K562 (cell line): ENCODE measurements at regions of chr13 and their contacts with region 1.

Region 1: DNA sequence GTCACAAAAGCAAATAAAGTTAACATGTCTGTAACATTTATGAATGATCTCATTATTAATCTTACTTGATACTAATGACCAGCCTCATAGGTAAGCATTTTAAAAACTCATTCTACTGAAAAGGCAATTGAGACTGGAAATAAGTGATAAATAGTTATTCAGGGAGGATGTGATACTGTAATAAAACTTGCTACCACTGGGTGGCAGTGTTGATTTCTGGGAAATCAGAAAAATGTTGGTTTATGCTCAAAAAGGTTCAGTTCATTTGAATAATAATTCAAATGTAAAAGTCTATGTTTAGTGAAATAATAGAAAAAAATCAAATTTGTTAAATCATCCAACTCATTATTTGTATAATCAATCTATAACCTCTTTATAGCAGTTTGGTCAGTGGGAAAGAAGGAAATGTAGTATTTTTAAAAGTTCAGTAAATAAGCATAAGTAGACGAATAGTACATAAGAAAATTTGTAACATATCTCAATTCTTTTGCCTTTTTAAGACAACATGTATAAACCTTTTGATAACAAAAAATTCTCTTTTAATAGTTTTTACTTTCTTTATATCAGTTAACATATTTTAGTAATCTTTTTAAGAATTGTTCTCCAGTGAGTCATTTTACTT is 9.6 kb downstream of the ABHD13 start:
- DNase-seq: peak in 3 of 4 experiments; percentile 14 to 53 (median 29)
- ATAC-seq: peak; percentile 41; the same call in 1 of the 3 replicates
- H3K4me3 ChIP-seq: no peak overlapping the region
- H3K27ac ChIP-seq: no peak overlapping the region
- H3K4me1 ChIP-seq: peaks cover 0 to 4% of the 10 kb centered on the region in 2 experiments; a peak in 2 of 5 replicates
- H3K27me3 ChIP-seq: no peaks in the 10 kb centered on the region
- CTCF ChIP-seq: peak in 2 of 3 experiments; percentile 13 to 58; a peak in 4 of 6 replicates
- EP300 ChIP-seq: no peak
- POLR2A ChIP-seq: no peak
- RAD21 ChIP-seq: peak; percentile 34 to 44; a peak in 2 of 4 replicates

Region 2: GRCh38 chr13:108276060-108276459 is 48.3 kb after region 1 on chr13:
- CTCF ChIA-PET with region 1: no interaction called
- POLR2A ChIA-PET with region 1: no interaction called
- in situ Hi-C with region 1: no loop called
- intact Hi-C with region 1: loop called (anchors 5 kb)
- DNase-seq: peak in 1 of 4 experiments; percentile 40
- ATAC-seq: peak; percentile 67
- H3K4me3 ChIP-seq: no peak overlapping the region
- H3K27ac ChIP-seq: no peak overlapping the region; the same call in 2 of the 3 replicates
- H3K4me1 ChIP-seq: no peaks in the 10 kb centered on the region; a peak in 1 of 5 replicates
- H3K27me3 ChIP-seq: no peaks in the 10 kb centered on the region
- CTCF ChIP-seq: no peak
- EP300 ChIP-seq: no peak
- POLR2A ChIP-seq: no peak
- RAD21 ChIP-seq: no peak

Region 3: DNA sequence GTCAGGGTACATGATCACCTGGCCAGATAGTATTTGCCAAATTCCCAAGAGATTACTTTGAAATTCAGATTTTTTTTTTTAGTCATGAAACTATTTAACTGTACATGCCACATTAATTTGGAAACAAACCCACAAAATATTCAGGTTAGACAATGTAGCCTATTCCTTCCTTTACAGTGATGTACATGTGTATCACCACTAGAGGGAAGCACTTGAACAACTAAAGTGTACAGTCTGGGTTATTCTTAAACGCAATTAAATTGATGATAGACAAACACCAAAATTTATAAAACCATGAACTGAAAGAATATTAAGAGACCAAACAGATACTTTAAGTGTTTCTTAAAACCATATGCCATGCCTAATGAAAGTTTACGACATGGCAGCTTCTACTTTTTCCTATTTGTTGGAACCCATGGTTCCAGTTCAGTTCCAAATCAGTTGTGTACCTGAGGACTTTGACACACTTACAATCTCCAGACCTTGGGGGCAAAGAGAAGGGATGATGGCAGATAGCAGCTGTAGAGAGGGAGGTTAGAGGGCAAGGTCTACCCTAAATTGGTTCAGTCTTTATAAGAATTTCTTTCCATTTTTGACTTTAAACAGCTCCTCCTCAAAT is 94.6 kb after region 1 on chr13:
- CTCF ChIA-PET with region 1: interaction called, 3 read pairs
- POLR2A ChIA-PET with region 1: no interaction called
- in situ Hi-C with region 1: no loop called
- intact Hi-C with region 1: loop called (anchors 5 kb)
- DNase-seq: peak; percentile 10 to 47 (median 26)
- ATAC-seq: peak; percentile 86
- H3K4me3 ChIP-seq: no peak overlapping the region
- H3K27ac ChIP-seq: no peak overlapping the region
- H3K4me1 ChIP-seq: no peaks in the 10 kb centered on the region
- H3K27me3 ChIP-seq: no peaks in the 10 kb centered on the region
- CTCF ChIP-seq: peak; percentile 31 to 61 (median 38); a peak in 3 of 6 replicates
- EP300 ChIP-seq: no peak
- POLR2A ChIP-seq: no peak
- RAD21 ChIP-seq: peak; percentile 71 to 79

Region 4: GRCh38 chr13:108508263-108508662 is 280.5 kb after region 1 on chr13:
- CTCF ChIA-PET with region 1: no interaction called
- POLR2A ChIA-PET with region 1: no interaction called
- in situ Hi-C with region 1: no loop called
- intact Hi-C with region 1: loop called (anchors 5 kb)
- DNase-seq: peak in 1 of 4 experiments; percentile 27
- ATAC-seq: no peak
- H3K4me3 ChIP-seq: no peak overlapping the region
- H3K27ac ChIP-seq: no peak overlapping the region
- H3K4me1 ChIP-seq: no peaks in the 10 kb centered on the region
- H3K27me3 ChIP-seq: no peaks in the 10 kb centered on the region
- CTCF ChIP-seq: peak in 2 of 3 experiments; percentile 22 to 40; a peak in 3 of 6 replicates
- EP300 ChIP-seq: no peak
- POLR2A ChIP-seq: no peak
- RAD21 ChIP-seq: peak; percentile 38 to 42; a peak in 2 of 4 replicates

Region 5: GRCh38 chr13:108769213-108770070 is 541.7 kb after region 1 on chr13:
- CTCF ChIA-PET with region 1: no interaction called
- POLR2A ChIA-PET with region 1: no interaction called
- in situ Hi-C with region 1: no loop called
- intact Hi-C with region 1: loop called (anchors 10 kb)
- DNase-seq: peak; percentile 53 to 89 (median 66)
- ATAC-seq: peak; percentile 94
- H3K4me3 ChIP-seq: no peak overlapping the region
- H3K27ac ChIP-seq: peak overlapping the region; percentile 99
- H3K4me1 ChIP-seq: peaks cover 0 to 18% of the 10 kb centered on the region in 2 experiments; a peak in 2 of 5 replicates
- H3K27me3 ChIP-seq: no peaks in the 10 kb centered on the region
- CTCF ChIP-seq: no peak
- EP300 ChIP-seq: peak; percentile 99
- POLR2A ChIP-seq: no peak
- RAD21 ChIP-seq: peak in 1 of 2 experiments; percentile 14; a peak in 1 of 4 replicates

Region 6: DNA sequence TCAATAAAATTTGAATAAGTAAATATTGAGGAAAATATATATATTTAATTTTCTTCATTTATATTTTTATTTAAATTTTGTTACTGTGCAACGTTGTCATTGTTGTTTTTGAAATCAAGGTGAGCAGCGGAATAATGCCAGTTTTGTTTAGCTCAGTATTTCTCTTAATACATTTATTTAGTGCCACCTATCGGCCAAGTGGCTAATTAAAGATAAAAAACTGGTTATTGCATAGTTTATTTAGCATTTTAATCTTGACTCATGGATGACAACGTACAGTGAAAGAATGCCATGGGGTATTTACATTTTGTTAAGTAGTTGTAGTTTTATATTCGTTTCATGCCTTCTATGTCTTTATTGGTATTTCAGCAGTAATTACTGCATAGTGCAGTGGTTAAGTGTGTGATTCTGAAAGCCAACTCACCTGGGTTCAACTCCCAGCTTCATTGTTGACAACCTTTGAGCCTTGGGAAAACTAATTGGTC is 667.5 kb after region 1 on chr13:
- CTCF ChIA-PET with region 1: no interaction called
- POLR2A ChIA-PET with region 1: no interaction called
- in situ Hi-C with region 1: no loop called
- intact Hi-C with region 1: loop called (anchors 5 kb)
- DNase-seq: peak in 1 of 4 experiments; percentile 48
- ATAC-seq: no peak
- H3K4me3 ChIP-seq: no peak overlapping the region
- H3K27ac ChIP-seq: no peak overlapping the region; the same call in 2 of the 3 replicates
- H3K4me1 ChIP-seq: no peaks in the 10 kb centered on the region
- H3K27me3 ChIP-seq: no peaks in the 10 kb centered on the region
- CTCF ChIP-seq: peak; percentile 20 to 47 (median 21); a peak in 3 of 6 replicates
- EP300 ChIP-seq: no peak
- POLR2A ChIP-seq: no peak
- RAD21 ChIP-seq: peak; percentile 35 to 52

Region 7: DNA sequence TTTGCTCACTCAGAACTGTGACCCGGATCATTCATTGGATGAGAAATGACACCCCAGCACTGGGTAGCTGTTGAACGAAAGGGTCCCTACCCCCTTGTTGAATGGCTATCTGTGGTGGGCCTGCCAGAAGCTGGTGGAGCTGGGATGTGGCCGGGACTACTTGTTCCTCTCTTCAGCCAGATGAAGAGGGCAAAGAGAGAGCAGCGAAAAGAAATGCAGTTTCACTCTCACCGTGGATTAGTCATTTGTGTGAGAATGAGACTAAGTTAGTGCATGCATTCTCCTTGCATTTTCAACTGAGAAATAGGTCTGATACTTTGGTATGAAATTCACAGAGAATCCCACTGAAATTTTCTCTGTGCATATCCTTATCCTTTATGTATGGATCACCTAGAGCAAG is 1005.5 kb after region 1 on chr13:
- CTCF ChIA-PET with region 1: no interaction called
- POLR2A ChIA-PET with region 1: no interaction called
- in situ Hi-C with region 1: no loop called
- intact Hi-C with region 1: no loop called
- DNase-seq: no peak
- ATAC-seq: no peak
- H3K4me3 ChIP-seq: no peak overlapping the region
- H3K27ac ChIP-seq: no peak overlapping the region
- H3K4me1 ChIP-seq: no peaks in the 10 kb centered on the region
- H3K27me3 ChIP-seq: no peaks in the 10 kb centered on the region
- CTCF ChIP-seq: no peak
- EP300 ChIP-seq: no peak
- POLR2A ChIP-seq: no peak
- RAD21 ChIP-seq: no peak